ENCODE measurements at regions of chr3 and their contacts with region 1.

Region 1: DNA sequence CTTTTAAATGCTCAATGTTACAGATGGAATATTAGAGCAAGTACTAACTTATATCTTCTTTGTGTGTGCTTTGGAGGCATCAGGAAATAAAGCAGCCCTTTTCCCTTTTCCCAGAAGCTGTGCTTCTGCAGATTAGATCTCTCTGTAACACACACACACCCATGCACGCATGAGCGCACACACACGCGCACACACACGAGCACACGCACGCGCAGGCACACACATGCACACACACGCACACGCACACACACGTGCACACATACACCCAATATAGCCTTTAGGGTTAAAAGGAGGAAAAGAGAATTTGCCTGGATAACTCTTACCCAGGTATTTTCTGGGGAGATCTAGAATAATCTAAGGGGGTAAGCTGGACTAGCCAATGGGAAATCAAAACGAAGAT is 56.9 kb downstream of the TFRC start:
- DNase-seq: no peak
- ATAC-seq: no peak
- H3K4me3 ChIP-seq: no peak overlapping the region
- H3K27ac ChIP-seq: no peak overlapping the region
- H3K4me1 ChIP-seq: no peaks in the 10 kb centered on the region
- H3K27me3 ChIP-seq: no peaks in the 10 kb centered on the region
- CTCF ChIP-seq: no peak
- POLR2A ChIP-seq: no peak

Region 2: GRCh38 chr3:195909644-195910508 is 115.1 kb before region 1 on chr3:
- intact Hi-C with region 1: no loop called
- DNase-seq: peak; percentile 91 to 93 (median 93)
- ATAC-seq: peak; percentile 62 to 85 (median 76)
- H3K4me3 ChIP-seq: peak overlapping the region; percentile 27 to 70 (median 61)
- H3K27ac ChIP-seq: peak overlapping the region; percentile 19 to 53 (median 37)
- H3K4me1 ChIP-seq: peaks cover 0 to 54% (median 29%) of the 10 kb centered on the region in 4 donors
- H3K27me3 ChIP-seq: no peaks in the 10 kb centered on the region
- CTCF ChIP-seq: no peak
- POLR2A ChIP-seq: peak; percentile 30

Region 3: GRCh38 chr3:195956571-195956970 is 68.4 kb before region 1 on chr3:
- intact Hi-C with region 1: no loop called
- DNase-seq: no peak
- ATAC-seq: no peak
- H3K4me3 ChIP-seq: no peak overlapping the region
- H3K27ac ChIP-seq: no peak overlapping the region
- H3K4me1 ChIP-seq: peaks cover 0 to 20% (median 6%) of the 10 kb centered on the region in 4 donors
- H3K27me3 ChIP-seq: no peaks in the 10 kb centered on the region
- CTCF ChIP-seq: no peak
- POLR2A ChIP-seq: no peak

Region 4: DNA sequence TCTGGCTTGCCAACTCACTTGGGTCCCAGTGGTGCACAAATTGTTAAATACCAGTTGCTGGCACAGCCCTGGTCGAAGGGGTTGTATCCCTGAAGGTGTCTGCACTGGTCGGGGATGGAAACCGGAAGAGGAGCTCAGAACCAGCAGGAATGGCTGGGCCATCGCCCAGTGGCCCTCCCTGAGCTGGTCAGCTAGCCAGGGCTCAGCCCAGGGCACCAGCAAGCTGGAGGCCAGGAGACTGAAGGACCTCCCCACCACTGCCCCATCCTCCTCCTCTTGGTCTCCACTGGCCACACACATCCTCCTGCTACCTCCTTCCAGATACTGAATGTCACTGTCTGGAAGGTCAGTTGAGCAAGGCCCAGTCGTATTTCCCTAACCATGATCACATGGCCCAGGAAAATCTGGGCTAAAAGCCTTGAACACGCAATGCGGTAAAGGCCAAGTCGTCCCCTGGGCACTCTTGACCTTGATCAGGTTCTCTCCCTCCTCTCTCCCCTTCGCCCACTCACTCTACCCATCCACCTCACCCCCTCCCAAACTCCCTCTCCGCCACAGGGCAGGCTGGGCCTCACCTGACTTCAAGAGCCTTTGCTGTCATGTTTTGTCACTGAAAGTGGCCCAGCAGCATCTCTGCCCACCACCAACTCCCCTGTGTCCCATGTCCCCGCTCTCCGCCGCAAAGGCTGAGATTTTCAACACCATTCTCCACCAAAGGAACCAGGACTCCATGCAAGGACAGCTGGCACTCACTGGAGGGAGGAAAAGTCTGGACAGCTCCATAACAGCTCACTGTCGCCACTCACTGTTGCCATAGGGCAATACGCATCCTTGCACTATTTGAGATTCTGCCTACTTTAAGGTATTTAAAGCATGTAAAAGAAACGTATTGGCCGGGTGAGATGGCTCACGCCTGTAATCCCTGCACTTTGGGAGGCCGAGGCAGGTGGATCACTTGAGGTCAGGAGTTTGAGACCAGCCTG is 174.1 kb after region 1 on chr3:
- intact Hi-C with region 1: loop called in 1 of 2 experiments (anchors 5 kb)
- DNase-seq: no peak
- ATAC-seq: peak in 1 of 4 donors; percentile 9
- H3K4me3 ChIP-seq: no peak overlapping the region
- H3K27ac ChIP-seq: no peak overlapping the region
- H3K4me1 ChIP-seq: peaks cover 0 to 5% (median 0%) of the 10 kb centered on the region in 4 donors
- H3K27me3 ChIP-seq: no peaks in the 10 kb centered on the region
- CTCF ChIP-seq: peak in 2 of 4 donors; percentile 6 to 19
- POLR2A ChIP-seq: no peak